ENCODE measurements at regions of chr1 and their contacts with region 1.

Region 1: GRCh38 chr1:63442141-63442475 is 74.7 kb downstream of the ALG6 start:
- DNase-seq: no peak
- ATAC-seq: no peak
- H3K4me3 ChIP-seq: no peak overlapping the region
- H3K27ac ChIP-seq: no peak overlapping the region
- H3K4me1 ChIP-seq: no peaks in the 10 kb centered on the region
- H3K27me3 ChIP-seq: no peaks in the 10 kb centered on the region
- CTCF ChIP-seq: no peak

Region 2: GRCh38 chr1:62841587-62842169 is 600.4 kb before region 1 on chr1:
- intact Hi-C with region 1: loop called (anchors 5 to 10 kb)
- DNase-seq: no peak
- ATAC-seq: peak; percentile 75 to 92 (median 82)
- H3K4me3 ChIP-seq: no peak overlapping the region
- H3K27ac ChIP-seq: no peak overlapping the region
- H3K4me1 ChIP-seq: no peaks in the 10 kb centered on the region
- H3K27me3 ChIP-seq: no peaks in the 10 kb centered on the region
- CTCF ChIP-seq: peak; percentile 73

Region 3: GRCh38 chr1:63255153-63255552 is 187.0 kb before region 1 on chr1:
- intact Hi-C with region 1: no loop called
- DNase-seq: no peak
- ATAC-seq: no peak
- H3K4me3 ChIP-seq: no peak overlapping the region
- H3K27ac ChIP-seq: no peak overlapping the region
- H3K4me1 ChIP-seq: peaks cover 8% of the 10 kb centered on the region
- H3K27me3 ChIP-seq: no peaks in the 10 kb centered on the region
- CTCF ChIP-seq: no peak

Region 4: DNA sequence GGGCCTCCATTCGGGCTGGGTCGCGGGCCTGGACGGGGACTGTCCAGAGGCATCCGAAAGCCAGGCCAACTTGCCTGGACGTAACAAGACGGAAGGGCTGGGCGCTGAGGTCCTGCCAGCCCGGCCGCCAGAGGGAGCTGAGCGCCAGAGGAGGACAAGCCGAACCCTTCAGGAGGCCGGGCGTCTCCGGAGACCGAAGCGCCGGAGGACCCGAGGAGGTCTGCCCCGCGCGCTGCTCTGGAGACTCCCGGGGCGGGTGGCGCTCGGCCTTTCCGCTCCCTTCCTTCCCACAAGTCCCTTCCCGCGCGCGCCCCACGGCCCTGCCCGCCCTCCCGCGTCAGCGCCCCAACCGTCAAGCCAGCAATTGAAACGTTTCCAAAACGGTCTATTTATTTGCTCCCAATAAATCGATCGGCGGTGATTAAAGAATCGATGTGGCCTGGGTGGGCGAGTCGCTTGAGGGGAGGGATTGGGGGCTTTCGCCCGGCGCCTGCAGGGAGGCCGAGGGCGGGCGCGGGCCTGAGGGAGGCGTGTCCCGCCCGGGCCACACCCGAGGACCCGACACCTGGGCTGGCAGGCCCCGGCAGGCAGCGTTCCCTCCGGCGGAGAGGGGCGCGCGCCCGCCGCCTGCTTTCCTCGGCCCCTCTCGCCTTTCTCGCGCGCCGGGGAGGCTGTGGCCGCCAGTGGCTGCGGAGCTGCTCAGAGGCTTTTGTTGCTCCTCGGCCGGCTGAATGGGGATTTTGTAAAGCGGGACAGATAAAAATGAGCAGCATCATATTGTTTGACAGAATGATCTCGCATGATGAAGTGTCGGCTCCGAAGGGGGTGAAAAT is 124.9 kb before region 1 on chr1:
- intact Hi-C with region 1: loop called (anchors 5 to 10 kb)
- DNase-seq: peak; percentile 62 to 83
- ATAC-seq: peak; percentile 83 to 93 (median 90)
- H3K4me3 ChIP-seq: peak overlapping the region; percentile 71
- H3K27ac ChIP-seq: no peak overlapping the region
- H3K4me1 ChIP-seq: peaks cover 8% of the 10 kb centered on the region
- H3K27me3 ChIP-seq: peaks cover 0 to 81% (median 40%) of the 10 kb centered on the region in 3 donors
- CTCF ChIP-seq: peak; percentile 72

Region 5: DNA sequence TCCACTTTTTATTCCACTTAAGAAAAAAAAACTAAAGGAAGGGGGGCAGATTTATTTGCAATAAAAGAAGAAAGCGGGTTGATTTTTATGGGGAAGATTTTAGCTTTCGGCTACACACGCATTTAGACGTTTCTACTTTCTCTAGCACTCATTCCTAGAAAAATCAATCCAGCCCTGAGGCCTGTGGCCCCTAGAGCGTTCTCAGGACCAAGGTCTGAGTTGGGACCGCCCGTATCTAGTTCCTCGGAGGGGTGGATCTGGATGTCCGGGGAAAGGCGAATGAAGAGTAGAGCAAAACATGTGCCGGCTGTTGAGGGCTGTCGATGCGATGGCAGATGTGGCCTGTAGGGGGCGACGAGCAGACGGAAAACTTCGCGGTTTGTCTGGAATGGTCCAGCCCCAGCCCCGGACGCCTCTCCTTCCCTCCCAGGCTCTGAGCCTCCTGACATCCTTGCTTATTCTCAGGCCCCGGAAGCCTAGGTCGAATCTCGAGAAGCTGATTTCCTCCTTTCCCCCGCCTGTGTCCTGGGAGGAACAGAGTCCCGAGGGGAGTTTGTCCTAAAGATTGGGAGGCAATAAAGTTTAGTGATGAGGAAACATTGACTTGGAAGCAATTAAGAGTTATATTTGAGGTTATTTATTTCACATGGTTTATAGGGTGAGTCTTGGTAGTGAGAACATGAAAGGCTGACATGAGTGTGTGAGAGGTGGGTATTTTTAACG is 114.5 kb before region 1 on chr1:
- intact Hi-C with region 1: loop called in 1 of 2 experiments (anchors 10 kb)
- DNase-seq: peak; percentile 50 to 69
- ATAC-seq: peak; percentile 76 to 85 (median 82)
- H3K4me3 ChIP-seq: peak overlapping the region; percentile 12
- H3K27ac ChIP-seq: no peak overlapping the region
- H3K4me1 ChIP-seq: peaks cover 11% of the 10 kb centered on the region
- H3K27me3 ChIP-seq: peaks cover 3 to 99% (median 56%) of the 10 kb centered on the region in 3 donors
- CTCF ChIP-seq: peak; percentile 76

Region 6: DNA sequence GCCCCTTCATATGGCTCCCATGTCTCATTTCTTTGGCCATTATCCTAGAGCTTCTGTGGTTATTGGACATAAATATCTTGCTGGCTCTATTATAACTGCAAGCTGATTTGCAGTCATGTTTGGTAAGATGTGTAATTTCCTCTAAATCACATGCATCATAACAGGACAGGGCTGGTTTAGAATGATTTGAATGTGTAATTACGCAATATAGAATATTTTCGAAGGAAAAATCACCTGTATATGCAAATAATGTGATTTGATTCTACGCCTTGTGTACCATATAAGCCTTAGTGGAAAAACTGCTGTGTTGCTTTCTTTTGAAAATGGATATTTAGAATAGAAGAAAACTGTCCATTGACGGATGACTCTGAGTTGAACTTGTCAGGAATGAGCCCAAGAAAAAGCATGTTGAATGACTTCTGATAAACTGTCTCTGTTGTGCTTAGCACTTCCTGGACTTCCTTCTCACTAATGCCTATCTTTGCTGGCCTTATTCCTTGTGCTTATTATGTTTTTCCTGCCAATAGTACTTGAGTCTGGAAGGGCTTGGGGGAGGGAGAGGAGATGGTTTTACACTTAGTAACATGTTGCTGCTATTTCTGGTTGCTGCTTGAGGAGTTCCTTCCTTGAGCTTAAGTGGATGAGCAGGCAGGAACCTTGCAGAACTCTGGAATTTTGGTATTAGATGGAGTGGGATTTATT is 1034.3 kb after region 1 on chr1:
- intact Hi-C with region 1: no loop called
- DNase-seq: no peak
- ATAC-seq: peak; percentile 51 to 84 (median 72)
- H3K4me3 ChIP-seq: no peak overlapping the region
- H3K27ac ChIP-seq: peak overlapping the region; percentile 48
- H3K4me1 ChIP-seq: peaks cover 21% of the 10 kb centered on the region
- H3K27me3 ChIP-seq: no peaks in the 10 kb centered on the region
- CTCF ChIP-seq: no peak